ENCODE measurements at regions of chr19 and their contacts with region 1.

Region 1: GRCh38 chr19:5803752-5804515 is 933 bp upstream of the NRTN start:
- DNase-seq: peak; percentile 79
- H3K4me3 ChIP-seq: peak overlapping the region; percentile 1 to 4
- H3K27ac ChIP-seq: no peak overlapping the region
- H3K4me1 ChIP-seq: no peaks in the 10 kb centered on the region
- H3K27me3 ChIP-seq: no peaks in the 10 kb centered on the region
- CTCF ChIP-seq: peak; percentile 55 to 96 (median 90)
- POLR2A ChIP-seq: no peak

Region 2: DNA sequence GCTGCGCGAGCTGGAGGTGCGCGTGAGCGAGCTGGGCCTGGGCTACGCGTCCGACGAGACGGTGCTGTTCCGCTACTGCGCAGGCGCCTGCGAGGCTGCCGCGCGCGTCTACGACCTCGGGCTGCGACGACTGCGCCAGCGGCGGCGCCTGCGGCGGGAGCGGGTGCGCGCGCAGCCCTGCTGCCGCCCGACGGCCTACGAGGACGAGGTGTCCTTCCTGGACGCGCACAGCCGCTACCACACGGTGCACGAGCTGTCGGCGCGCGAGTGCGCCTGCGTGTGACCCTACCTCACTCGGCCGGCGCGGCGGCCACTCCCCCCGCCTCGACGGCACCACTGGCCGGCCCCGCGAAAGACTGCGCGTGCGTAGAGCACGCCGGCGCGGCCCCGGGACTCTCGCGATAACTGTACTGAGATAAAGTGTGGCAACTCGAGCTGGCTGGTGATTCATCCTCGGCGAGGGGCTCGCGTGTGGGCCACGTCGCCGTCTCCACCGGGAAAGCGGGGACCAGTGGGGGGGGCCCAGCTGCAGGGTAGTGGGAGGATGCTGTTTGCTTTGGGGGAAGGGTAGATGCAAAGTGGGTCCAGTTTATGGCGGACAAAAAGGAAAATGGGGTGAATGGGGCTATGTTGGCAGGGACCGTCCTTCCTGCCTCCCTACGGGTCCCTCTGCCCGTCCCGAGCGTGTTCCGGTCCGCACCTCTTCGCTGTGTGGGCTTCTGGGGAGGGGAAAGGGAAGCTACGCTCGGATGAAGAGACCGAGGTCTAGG is 24.1 kb after region 1 on chr19:
- intact Hi-C with region 1: loop called (anchors 2 kb)
- DNase-seq: peak; percentile 76
- H3K4me3 ChIP-seq: peak overlapping the region; percentile 25 to 39
- H3K27ac ChIP-seq: peak overlapping the region; percentile 49 to 68
- H3K4me1 ChIP-seq: no peaks in the 10 kb centered on the region
- H3K27me3 ChIP-seq: no peaks in the 10 kb centered on the region
- CTCF ChIP-seq: no peak
- POLR2A ChIP-seq: peak; percentile 85

Region 3: GRCh38 chr19:5891938-5892771 is 88.2 kb after region 1 on chr19:
- intact Hi-C with region 1: loop called (anchors 1 kb)
- DNase-seq: no peak
- H3K4me3 ChIP-seq: no peak overlapping the region
- H3K27ac ChIP-seq: no peak overlapping the region
- H3K4me1 ChIP-seq: no peaks in the 10 kb centered on the region
- H3K27me3 ChIP-seq: no peaks in the 10 kb centered on the region
- CTCF ChIP-seq: peak in 3 of 4 experiments; percentile 61 to 77 (median 74)
- POLR2A ChIP-seq: no peak

Region 4: DNA sequence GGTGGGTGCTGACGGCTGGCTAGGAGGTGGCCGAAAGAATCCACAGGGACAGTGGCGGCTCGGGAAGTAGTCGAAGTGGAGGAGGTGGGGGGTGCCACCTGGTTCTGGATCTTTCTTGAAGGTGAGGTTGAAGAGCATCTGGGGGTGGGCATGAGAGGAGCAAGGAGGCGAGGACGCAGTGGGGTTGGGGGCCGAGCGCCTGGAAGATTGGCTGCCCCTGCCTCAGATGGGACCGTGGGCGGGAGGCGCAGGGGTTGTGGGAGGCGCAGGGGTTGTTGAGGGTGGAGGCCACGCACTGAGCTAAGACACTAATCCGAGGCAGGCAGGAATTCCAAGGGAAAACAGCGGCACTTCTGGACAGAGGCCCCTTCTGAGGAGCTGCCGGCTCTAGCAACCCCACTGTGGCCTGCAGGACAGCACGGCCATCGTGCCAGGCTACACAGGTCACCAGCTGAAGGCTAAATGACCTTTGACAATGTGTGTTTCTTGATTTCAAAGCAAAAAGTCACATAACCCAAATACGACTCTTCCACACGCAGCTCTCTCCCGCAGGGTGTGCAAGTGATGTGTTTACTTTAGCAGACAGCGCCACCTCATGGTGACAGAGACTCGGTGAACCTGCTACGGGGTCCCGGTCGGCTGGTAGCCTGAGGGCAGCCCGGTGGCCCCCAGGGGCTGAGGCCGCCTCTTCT is 218.1 kb after region 1 on chr19:
- intact Hi-C with region 1: loop called (anchors 2 kb)
- DNase-seq: peak; percentile 85
- H3K4me3 ChIP-seq: no peak overlapping the region
- H3K27ac ChIP-seq: peak overlapping the region; percentile 84 to 90
- H3K4me1 ChIP-seq: peaks cover 17% of the 10 kb centered on the region
- H3K27me3 ChIP-seq: no peaks in the 10 kb centered on the region
- CTCF ChIP-seq: peak; percentile 75 to 98 (median 91)
- POLR2A ChIP-seq: no peak

Measured in prostate gland (tissue), 2 donors.